AG04450 (cell line): ENCODE measurements at regions of chr4 and their contacts with region 1.

Region 1: GRCh38 chr4:72326692-72327632 is 242.1 kb downstream of the ADAMTS3 start:
- DNase-seq: no peak
- H3K4me3 ChIP-seq: no peak overlapping the region
- H3K27ac ChIP-seq: no peak overlapping the region
- H3K27me3 ChIP-seq: no peaks in the 10 kb centered on the region
- CTCF ChIP-seq: peak; percentile 71

Region 2: GRCh38 chr4:72179342-72179741 is 147.6 kb before region 1 on chr4:
- CTCF ChIA-PET with region 1: no interaction called
- POLR2A ChIA-PET with region 1: no interaction called
- DNase-seq: no peak
- H3K4me3 ChIP-seq: no peak overlapping the region
- H3K27ac ChIP-seq: no peak overlapping the region
- H3K27me3 ChIP-seq: no peaks in the 10 kb centered on the region
- CTCF ChIP-seq: no peak

Region 3: DNA sequence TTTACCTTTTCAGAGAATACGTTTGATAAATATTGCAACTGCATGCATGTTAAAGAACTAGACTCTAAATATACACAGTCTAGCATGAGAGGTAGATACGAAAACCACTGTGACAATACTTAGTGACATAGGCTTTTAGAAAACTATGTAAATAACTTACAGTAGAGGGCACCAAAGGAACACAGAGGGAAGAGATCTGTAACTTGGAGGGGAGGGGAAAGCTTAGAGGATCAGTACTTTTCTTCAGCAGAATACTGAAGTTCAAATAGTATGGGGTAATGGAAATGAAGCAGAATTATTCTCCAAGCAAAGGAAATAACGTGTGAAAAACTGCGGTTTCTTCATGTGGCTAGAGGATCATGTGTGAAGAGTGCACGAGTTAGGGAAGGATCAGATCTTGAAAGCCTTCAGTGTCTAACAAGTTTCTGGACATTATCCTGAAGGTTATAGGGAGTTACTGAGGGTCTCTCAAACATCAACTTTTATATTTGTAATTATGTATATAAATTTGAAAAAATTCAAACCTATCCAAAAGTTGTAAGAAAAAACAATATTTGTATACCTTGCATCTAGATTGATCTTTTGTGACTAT is 30.9 kb before region 1 on chr4:
- CTCF ChIA-PET with region 1: interaction called, 11 read pairs
- POLR2A ChIA-PET with region 1: no interaction called
- DNase-seq: peak; percentile 15
- H3K4me3 ChIP-seq: no peak overlapping the region
- H3K27ac ChIP-seq: no peak overlapping the region
- H3K27me3 ChIP-seq: no peaks in the 10 kb centered on the region
- CTCF ChIP-seq: peak; percentile 76

Region 4: DNA sequence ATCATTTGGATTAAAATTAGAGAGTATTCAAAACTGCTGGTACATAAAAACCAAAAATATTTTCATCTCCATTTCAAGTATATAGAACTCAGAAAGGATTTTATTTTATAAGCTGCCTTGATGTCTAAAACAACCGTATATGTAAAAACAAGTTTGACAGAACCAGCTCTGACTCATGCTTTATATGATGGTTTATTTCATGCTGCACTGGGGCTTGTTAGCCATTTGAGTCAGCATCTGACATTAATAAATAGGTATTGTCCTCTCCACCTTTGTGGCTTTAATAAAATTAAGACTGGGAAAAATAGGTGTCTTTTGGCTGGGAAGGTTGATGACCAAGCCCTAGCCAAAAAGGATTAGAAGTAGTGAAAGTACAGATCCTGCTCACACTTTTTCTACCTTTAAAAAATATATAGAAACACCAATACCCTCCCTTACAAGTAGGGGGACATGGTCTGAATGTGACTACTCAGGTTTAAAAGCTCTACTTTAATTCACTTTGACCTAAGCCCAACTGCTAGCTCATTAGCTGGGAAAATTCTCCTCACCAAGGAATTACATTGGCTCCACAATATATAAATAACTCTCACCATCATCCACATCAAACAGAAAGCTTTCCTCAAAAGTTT is 14.0 kb after region 1 on chr4:
- CTCF ChIA-PET with region 1: interaction called, 21 read pairs
- POLR2A ChIA-PET with region 1: no interaction called
- DNase-seq: no peak
- H3K4me3 ChIP-seq: no peak overlapping the region
- H3K27ac ChIP-seq: no peak overlapping the region
- H3K27me3 ChIP-seq: no peaks in the 10 kb centered on the region
- CTCF ChIP-seq: no peak

Region 5: GRCh38 chr4:72390409-72390808 is 63.4 kb after region 1 on chr4:
- CTCF ChIA-PET with region 1: interaction called, 10 read pairs
- POLR2A ChIA-PET with region 1: no interaction called
- DNase-seq: no peak
- H3K4me3 ChIP-seq: no peak overlapping the region
- H3K27ac ChIP-seq: no peak overlapping the region
- H3K27me3 ChIP-seq: no peaks in the 10 kb centered on the region
- CTCF ChIP-seq: no peak

Region 6: DNA sequence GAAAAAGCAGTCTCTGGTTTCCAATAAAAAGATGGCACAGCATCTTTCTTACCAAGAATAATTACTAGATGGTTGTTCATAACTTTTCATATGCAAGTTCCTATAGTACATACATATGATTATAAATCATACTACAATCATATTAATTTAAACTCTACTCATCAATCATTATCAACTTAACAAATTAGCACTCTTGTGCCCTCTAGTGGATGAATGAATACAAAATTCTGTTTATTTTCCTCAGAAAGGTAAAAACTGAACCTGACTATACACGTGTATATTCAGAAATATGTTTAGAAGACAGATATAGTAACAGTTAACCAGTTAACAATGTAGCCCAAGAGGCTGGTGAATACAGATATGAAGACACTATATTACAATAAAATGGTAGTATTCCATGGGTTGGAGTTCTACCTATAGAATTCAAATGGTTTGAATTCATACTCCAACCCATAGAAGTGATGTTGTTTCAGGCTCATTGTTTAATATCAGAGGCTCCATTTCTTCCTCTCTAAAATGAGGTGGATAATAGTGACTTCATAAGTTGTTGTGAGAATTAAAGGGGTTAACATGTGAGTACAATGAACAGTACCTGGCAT is 142.0 kb after region 1 on chr4:
- CTCF ChIA-PET with region 1: interaction called, 73 read pairs
- POLR2A ChIA-PET with region 1: no interaction called
- DNase-seq: no peak
- H3K4me3 ChIP-seq: no peak overlapping the region
- H3K27ac ChIP-seq: no peak overlapping the region
- H3K27me3 ChIP-seq: no peaks in the 10 kb centered on the region
- CTCF ChIP-seq: peak; percentile 48